ENCODE measurements at regions of chr2 and their contacts with region 1.

Region 1: GRCh38 chr2:218852911-218853667 is 6.5 kb upstream of the WNT6 start:
- DNase-seq: no peak
- H3K4me3 ChIP-seq: no peak overlapping the region
- CTCF ChIP-seq: peak; percentile 76

Region 2: DNA sequence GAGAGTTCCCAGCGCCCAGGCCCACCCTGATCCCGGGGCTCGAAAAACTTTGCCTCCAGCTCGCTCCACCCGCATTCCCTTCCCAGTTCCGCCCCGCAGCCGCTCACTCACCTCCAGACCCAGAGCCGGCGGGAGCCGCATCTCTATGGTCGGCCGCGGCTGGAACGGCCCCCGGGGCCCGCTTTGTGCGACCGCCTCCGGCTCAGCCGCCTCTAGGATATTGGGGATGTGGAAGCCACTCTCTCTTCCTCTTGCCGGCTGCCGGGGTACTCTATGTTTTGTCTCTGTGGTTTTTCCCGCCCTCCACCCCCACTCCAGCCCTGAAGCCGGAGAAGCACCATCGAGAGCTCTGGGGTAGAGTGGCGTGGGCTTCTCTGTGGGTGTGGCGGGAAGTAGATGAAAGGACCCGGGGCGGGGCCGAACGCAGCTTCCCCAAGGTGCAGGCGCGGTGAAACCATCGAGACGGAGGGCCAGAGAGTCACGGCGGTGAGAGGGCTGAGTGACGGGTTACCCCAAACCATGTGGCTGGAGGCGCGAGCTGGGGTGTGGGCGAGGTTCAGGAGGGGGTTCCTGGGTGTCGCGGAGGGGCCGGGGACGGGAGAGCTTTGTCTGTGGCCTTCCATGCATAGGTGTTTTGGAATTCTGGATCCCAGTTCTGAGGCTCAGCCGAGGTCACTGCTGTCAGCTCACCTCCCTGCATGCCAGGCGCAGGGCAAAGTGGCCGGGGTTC is 193.7 kb before region 1 on chr2 and contains the starts of genes BCS1L and ZNF142:
- CTCF ChIA-PET with region 1: interaction called, 87 read pairs
- POLR2A ChIA-PET with region 1: no interaction called
- DNase-seq: no peak
- H3K4me3 ChIP-seq: peak within 1 kb of the TSS; percentile 85
- CTCF ChIP-seq: no peak

Region 3: DNA sequence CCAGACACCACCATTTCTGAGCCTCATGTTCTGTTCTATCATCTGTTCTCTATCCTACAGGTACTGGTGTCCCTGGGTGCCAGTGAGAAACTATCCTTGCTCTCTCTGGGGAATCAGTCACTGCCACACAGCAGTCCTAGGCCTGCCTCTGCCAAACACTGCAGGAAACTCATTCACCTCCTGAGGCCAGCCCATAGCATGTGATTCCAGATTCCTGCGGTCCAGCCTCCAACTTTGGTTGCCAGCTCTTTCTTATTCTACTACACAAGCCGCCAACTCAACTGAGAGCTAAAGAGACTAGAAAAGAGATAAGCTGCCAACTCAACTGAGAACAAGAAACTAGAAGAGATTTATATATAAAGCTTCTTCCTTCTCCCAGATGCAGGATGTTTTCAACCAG is 151.3 kb before region 1 on chr2:
- CTCF ChIA-PET with region 1: interaction called, 16 read pairs
- POLR2A ChIA-PET with region 1: no interaction called
- DNase-seq: no peak
- H3K4me3 ChIP-seq: no peak overlapping the region
- CTCF ChIP-seq: no peak

Region 4: DNA sequence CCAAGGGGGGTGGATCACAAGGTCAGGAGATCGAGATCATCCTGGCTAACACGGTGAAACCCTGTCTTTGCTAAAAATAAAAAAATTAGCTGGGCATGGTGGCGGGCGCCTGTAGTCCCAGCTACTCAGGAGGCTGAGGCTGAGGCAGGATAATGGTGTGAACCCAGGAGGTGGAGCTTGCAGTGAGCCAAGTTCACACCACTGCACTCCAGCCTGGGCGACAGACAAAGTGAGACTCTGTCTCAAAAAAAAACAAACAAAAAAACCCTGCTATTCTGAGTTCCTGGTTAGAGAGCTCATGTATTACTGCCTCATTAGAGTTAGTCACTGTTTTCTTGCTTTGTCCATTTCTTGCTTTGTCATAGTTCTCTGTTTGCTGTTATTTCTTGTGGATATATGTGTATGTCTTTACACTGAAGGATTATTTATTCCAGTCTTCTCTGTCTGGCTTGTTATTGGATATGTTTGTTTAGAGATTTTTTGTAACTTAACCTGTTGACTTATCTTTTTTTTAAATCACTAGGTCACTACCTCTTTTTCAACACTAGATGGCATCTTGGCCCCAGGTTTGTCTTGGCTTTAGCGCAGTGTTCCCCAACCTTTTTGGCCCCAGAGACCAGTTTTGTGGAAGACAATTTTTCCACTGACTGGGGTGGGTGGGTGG is 125.5 kb before region 1 on chr2:
- CTCF ChIA-PET with region 1: interaction called, 106 read pairs
- POLR2A ChIA-PET with region 1: no interaction called
- DNase-seq: no peak
- H3K4me3 ChIP-seq: no peak overlapping the region
- CTCF ChIP-seq: no peak

Region 5: GRCh38 chr2:218829868-218830451 is 23.1 kb before region 1 on chr2:
- CTCF ChIA-PET with region 1: interaction called, 12 read pairs
- POLR2A ChIA-PET with region 1: no interaction called
- DNase-seq: no peak
- H3K4me3 ChIP-seq: no peak overlapping the region
- CTCF ChIP-seq: no peak

Region 6: DNA sequence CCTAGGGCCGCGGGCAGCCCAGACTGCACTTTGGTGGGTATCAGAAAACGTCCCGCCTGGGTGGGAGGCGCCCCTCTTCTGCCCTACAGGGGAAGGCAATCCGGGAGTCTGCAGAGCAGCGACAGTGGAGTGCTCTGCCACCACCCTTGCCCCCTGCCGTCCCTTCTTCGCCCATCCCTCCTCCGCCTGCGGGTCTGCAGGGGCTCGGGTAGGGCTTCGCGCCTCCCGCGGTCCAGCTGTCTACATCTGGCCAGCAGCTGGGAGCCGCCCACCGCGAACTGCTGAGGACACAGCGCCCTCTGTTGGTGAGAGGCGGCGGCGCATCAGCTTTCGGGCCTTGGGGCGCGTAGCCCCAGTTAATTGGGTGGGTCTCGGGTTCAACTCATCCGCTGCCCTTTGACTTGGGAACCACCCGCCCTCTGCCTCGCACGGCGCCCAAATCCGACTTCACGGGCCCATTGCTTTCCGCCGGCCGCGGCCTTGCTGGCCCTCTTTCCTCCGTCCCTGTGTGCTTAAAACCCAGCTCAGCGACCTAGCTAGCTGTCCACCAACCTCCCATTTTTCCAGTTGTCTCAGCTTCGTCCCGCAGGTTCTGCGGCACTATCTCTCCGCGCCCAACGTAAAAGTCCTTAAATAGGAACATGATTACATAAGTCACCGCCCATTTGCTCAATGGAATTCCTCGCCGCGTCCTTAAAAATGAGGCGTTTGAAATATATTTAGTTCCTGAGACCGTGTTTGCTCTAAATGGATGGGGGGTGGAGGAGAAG is 45.2 kb after region 1 on chr2:
- CTCF ChIA-PET with region 1: interaction called, 25 read pairs
- POLR2A ChIA-PET with region 1: no interaction called
- DNase-seq: no peak
- H3K4me3 ChIP-seq: no peak overlapping the region
- CTCF ChIP-seq: peak; percentile 90

Region 7: GRCh38 chr2:219142329-219142728 is 289.2 kb after region 1 on chr2:
- CTCF ChIA-PET with region 1: no interaction called
- POLR2A ChIA-PET with region 1: no interaction called
- DNase-seq: peak; percentile 46
- H3K4me3 ChIP-seq: no peak overlapping the region
- CTCF ChIP-seq: peak; percentile 51